Sciatic nerve (tissue), 2 donors: ENCODE measurements at regions of chr1 and their contacts with region 1.

Region 1: GRCh38 chr1:19651141-19651737 is 7.1 kb downstream of the NBL1 start:
- DNase-seq: no peak
- ATAC-seq: peak; percentile 87

Region 2: GRCh38 chr1:19344372-19345230 is 306.6 kb before region 1 on chr1:
- intact Hi-C with region 1: loop called (anchors 1 kb)
- DNase-seq: peak; percentile 80
- ATAC-seq: peak; percentile 67

Region 3: GRCh38 chr1:19495799-19496624 is 155.2 kb before region 1 on chr1:
- intact Hi-C with region 1: loop called (anchors 10 kb)
- DNase-seq: no peak
- ATAC-seq: no peak

Region 4: GRCh38 chr1:19785295-19786059 is 134.2 kb after region 1 on chr1:
- intact Hi-C with region 1: no loop called
- DNase-seq: no peak
- ATAC-seq: no peak